Right ventricle myocardium superior (tissue), 1 donor: ENCODE measurements at regions of chr16 and their contacts with region 1.

Region 1: DNA sequence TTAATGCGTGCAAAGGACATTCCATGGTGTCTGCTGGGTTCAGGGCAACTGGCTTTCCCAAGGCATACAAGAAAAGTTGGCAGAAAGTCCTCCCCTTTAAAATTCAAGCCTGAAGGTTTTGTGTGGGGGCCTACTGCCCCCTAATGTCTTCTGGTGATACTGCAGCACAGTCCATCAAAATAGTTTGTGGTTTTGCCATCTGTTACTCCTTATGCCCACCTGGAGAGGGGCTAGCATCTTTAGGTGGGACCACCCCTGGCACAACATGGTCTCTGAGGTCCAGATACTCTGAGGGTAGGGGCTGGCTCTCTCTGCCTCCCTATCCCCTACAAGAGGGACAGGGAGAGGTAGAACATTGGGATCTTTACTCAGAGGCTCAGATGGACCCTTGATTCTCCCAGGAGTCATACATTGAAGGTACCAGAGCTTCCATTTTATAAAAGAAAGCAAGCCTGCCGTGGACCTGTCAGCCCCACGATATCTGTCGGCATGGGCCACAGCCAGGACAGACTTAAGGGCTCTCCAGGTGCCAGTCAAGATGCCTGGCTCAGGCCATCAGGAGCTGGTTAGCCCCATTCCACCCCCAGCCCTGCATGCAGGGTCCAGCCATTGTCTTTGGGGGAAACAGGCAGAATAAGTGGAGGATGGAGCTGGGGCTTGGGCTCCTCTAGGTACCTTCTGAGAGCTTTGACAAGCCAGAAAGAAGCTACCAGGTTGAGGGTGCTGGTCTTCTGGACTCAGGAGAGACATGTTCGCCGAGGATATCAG is 6.3 kb downstream of the ESRP2 start:
- DNase-seq: no peak
- ATAC-seq: peak; percentile 56

Region 2: DNA sequence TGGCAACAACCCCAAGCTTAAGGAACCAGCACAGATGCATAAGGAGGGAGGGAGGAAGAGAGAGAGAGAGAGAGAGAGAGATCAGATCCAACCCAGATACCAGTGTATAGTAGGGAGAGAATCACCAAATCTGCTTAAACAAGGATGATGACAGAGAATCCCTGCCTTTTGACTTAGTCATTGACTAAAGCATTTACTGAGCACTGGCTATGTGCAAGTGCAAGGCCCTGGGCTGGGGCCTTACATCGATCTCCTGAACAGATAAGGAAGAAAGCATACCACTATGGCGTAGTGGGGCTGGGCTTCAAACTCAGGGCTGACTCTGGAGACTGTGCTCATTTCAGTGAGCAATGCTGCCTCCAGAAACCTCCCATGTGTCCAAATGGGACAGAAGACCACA is 407.1 kb before region 1 on chr16:
- intact Hi-C with region 1: loop called (anchors 10 kb)
- DNase-seq: no peak
- ATAC-seq: no peak

Region 3: GRCh38 chr16:68085259-68086071 is 144.2 kb before region 1 on chr16 and contains the start of gene NFATC3:
- intact Hi-C with region 1: loop called (anchors 5 kb)
- DNase-seq: peak; percentile 100
- ATAC-seq: peak; percentile 90
- total RNA-seq, gene NFATC3: 24.4 TPM